Activated CD4-positive, alpha-beta memory T cell treated with anti-CD3 and anti-CD28 coated beads for 36 hours (primary cell): ENCODE measurements at regions of chr2 and their contacts with region 1.

Region 1: GRCh38 chr2:105369747-105370690 is 28.8 kb downstream of the FHL2 start:
- DNase-seq: peak; percentile 93
- H3K4me3 Mint-ChIP-seq: no peak overlapping the region
- H3K27ac Mint-ChIP-seq: no peak overlapping the region
- H3K4me1 Mint-ChIP-seq: peaks cover 20% of the 10 kb centered on the region
- H3K27me3 Mint-ChIP-seq: no peaks in the 10 kb centered on the region

Region 2: DNA sequence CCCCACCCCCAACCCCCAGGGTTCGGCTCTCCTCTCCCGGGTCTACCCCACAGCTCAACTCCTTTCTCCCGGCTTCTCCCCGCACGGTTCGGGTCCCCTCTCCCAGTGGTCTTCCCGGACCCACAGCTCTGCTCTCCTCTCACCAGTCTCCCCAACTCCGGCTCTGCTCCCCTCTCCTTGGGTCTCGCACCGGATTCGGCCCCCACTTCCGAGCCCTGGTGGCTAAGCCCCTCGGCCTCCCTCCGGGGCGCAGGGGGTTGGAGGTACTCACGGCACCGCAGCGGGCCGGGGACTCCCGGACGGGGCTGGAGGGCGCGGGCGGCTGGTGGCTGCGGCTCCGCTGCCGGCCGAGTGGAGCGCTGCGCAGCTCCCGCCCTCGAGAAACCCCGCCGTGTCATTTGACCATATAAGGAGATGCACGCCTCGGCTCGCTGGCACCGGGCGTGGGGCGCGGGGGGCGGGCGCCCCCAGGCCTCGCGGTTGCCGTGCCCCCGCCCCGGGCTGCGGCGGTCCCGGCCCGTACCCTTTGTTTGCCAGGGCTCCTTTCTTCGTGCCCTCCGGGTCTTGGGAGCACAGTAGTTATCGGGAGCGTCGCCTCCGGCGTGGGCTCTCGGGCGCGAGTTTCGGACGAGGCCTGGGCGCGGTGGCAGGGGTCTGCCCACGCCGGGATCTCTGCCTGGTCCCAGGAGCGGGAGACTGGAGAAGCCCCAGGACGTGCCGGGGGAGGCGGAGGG is 28.8 kb after region 1 on chr2 and contains the start of gene FHL2:
- CTCF ChIA-PET with region 1: interaction called, 10 read pairs
- POLR2A ChIA-PET with region 1: no interaction called
- intact Hi-C with region 1: loop called (anchors 2 kb)
- DNase-seq: peak; percentile 77
- H3K4me3 Mint-ChIP-seq: peak within 1 kb of the TSS; percentile 70
- H3K27ac Mint-ChIP-seq: no peak within 1 kb of the TSS
- H3K4me1 Mint-ChIP-seq: peaks cover 7% of the 10 kb centered on the region
- H3K27me3 Mint-ChIP-seq: peaks cover 24% of the 10 kb centered on the region
- total RNA-seq, gene FHL2: 1.3 to 1.5 TPM

Region 3: GRCh38 chr2:105521205-105521604 is 151.2 kb after region 1 on chr2:
- CTCF ChIA-PET with region 1: interaction called, 69 read pairs
- POLR2A ChIA-PET with region 1: no interaction called
- intact Hi-C with region 1: loop called (anchors 1 kb)
- DNase-seq: no peak
- H3K4me3 Mint-ChIP-seq: no peak overlapping the region
- H3K27ac Mint-ChIP-seq: no peak overlapping the region
- H3K4me1 Mint-ChIP-seq: no peaks in the 10 kb centered on the region
- H3K27me3 Mint-ChIP-seq: peaks cover 3% of the 10 kb centered on the region

Region 4: GRCh38 chr2:105545730-105546627 is 176.0 kb after region 1 on chr2:
- CTCF ChIA-PET with region 1: interaction called, 36 read pairs
- POLR2A ChIA-PET with region 1: no interaction called
- intact Hi-C with region 1: loop called (anchors 1 kb)
- DNase-seq: peak; percentile 79
- H3K4me3 Mint-ChIP-seq: no peak overlapping the region
- H3K27ac Mint-ChIP-seq: no peak overlapping the region
- H3K4me1 Mint-ChIP-seq: peaks cover 11% of the 10 kb centered on the region
- H3K27me3 Mint-ChIP-seq: peaks cover 6% of the 10 kb centered on the region